ENCODE measurements at regions of chr3 and their contacts with region 1.

Region 1: DNA sequence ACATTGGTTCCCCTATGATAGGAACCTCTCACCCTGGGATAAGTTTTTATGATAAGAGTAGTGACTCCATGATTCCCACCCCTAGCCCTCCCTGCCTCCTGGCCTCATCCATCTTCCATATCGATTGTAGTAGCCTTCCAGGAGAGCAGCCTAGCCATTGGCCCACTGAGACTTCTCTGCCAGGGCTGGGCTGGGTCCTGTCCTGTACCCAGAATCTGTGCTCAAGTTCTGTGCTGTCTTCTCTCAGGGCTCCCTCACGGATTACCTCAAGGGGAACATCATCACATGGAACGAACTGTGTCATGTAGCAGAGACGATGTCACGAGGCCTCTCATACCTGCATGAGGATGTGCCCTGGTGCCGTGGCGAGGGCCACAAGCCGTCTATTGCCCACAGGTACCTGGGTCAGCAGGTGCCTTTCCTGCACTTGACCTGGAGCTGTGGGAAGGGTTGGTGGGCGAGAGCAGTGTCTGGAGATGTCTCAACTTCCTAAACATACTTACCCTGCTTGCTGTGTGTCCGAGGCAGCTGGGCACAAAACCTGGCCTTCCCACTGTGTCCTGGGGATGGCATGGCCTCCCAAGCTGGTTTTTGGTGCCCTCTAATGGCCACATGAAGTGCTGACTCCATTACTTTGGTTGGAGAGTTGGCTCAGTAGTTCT is 16.6 kb upstream of the EXOG start:
- DNase-seq: peak in 2 of 3 donors; percentile 65 to 74
- ATAC-seq: peak; percentile 90 to 96 (median 93)
- H3K4me3 ChIP-seq: no peak overlapping the region
- H3K27ac ChIP-seq: no peak overlapping the region
- H3K4me1 ChIP-seq: no peaks in the 10 kb centered on the region
- H3K27me3 ChIP-seq: no peaks in the 10 kb centered on the region
- CTCF ChIP-seq: peak; percentile 82 to 90 (median 86)
- POLR2A ChIP-seq: no peak

Region 2: GRCh38 chr3:38127611-38128302 is 351.8 kb before region 1 on chr3:
- intact Hi-C with region 1: loop called in 1 of 2 experiments (anchors 10 kb)
- DNase-seq: peak in 2 of 3 donors; percentile 12 to 38
- ATAC-seq: no peak
- H3K4me3 ChIP-seq: no peak overlapping the region
- H3K27ac ChIP-seq: peak overlapping the region in 1 of 3 donors; percentile 90
- H3K4me1 ChIP-seq: peaks cover 0 to 86% (median 42%) of the 10 kb centered on the region in 4 donors
- H3K27me3 ChIP-seq: no peaks in the 10 kb centered on the region
- CTCF ChIP-seq: no peak
- POLR2A ChIP-seq: no peak

Region 3: DNA sequence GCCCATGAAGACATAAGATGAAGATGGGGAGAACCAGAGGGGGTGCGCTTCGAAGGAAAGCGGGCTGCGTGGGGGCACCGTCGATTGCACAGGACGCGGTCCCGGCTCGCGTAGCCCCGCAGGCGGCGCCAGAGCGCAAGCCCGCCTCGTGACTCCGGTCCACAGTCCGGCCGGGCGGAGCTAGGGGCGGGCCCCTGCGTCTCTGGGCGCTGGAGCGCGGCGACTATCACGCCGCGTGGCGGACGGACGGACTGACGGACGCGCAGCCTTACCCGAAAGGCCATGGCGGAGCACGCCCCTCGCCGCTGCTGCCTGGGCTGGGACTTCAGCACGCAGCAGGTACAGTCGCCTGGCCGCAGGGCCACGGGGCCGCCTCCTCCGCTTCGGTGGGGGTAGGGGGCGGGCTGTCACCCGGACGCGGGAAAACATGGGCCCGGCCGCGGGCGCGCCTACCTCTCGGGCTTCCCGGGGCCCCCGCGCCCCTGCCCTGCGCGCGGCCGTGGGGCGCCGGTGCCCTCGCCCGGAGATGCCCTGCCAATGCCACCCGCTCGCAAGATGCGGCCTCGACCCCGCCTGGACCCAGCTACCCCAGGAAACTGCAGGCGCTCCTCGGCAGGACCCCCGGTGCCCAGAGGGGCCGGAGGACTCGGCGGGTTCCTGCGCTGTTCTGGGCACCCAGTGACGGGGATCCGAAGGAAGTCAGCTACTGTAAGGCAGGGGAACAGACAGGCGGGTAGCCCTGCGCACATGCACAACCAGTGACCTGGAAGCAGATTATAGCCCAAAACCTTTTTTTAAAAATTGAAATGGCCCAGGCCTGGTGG is 132.8 kb before region 1 on chr3 and contains the start of gene XYLB:
- intact Hi-C with region 1: loop called (anchors 5 kb)
- DNase-seq: peak; percentile 94 to 96 (median 95)
- ATAC-seq: peak; percentile 92 to 96 (median 93)
- H3K4me3 ChIP-seq: peak within 1 kb of the TSS; percentile 91 to 94 (median 93)
- H3K27ac ChIP-seq: peak within 1 kb of the TSS; percentile 44 to 87 (median 73)
- H3K4me1 ChIP-seq: peaks cover 0 to 35% (median 8%) of the 10 kb centered on the region in 4 donors
- H3K27me3 ChIP-seq: no peaks in the 10 kb centered on the region
- CTCF ChIP-seq: peak; percentile 85 to 91 (median 87)
- POLR2A ChIP-seq: peak; percentile 85
- total RNA-seq, gene XYLB: 26.2 to 48.3 (median 36.6) TPM

Region 4: GRCh38 chr3:38354588-38355330 is 124.8 kb before region 1 on chr3:
- intact Hi-C with region 1: loop called (anchors 5 kb)
- DNase-seq: peak in 1 of 3 donors; percentile 38
- ATAC-seq: peak in 1 of 4 donors; percentile 12
- H3K4me3 ChIP-seq: no peak overlapping the region
- H3K27ac ChIP-seq: no peak overlapping the region
- H3K4me1 ChIP-seq: peaks cover 0 to 10% (median 5%) of the 10 kb centered on the region in 4 donors
- H3K27me3 ChIP-seq: no peaks in the 10 kb centered on the region
- CTCF ChIP-seq: no peak
- POLR2A ChIP-seq: no peak

Region 5: GRCh38 chr3:38890426-38890825 is 410.9 kb after region 1 on chr3:
- intact Hi-C with region 1: no loop called
- DNase-seq: no peak
- ATAC-seq: no peak
- H3K4me3 ChIP-seq: no peak overlapping the region
- H3K27ac ChIP-seq: no peak overlapping the region
- H3K4me1 ChIP-seq: no peaks in the 10 kb centered on the region
- H3K27me3 ChIP-seq: no peaks in the 10 kb centered on the region
- CTCF ChIP-seq: no peak
- POLR2A ChIP-seq: no peak